ENCODE measurements at regions of chr17 and their contacts with region 1.

Region 1: GRCh38 chr17:76726231-76726775 is at the start of gene JMJD6:
- DNase-seq: peak; percentile 98
- H3K4me3 ChIP-seq: peak within 1 kb of the TSS; percentile 89 to 99 (median 98)
- H3K27ac ChIP-seq: peak within 1 kb of the TSS; percentile 100
- H3K4me1 ChIP-seq: peaks cover 21 to 65% (median 36%) of the 10 kb centered on the region in 4 donors
- H3K27me3 ChIP-seq: no peaks in the 10 kb centered on the region
- CTCF ChIP-seq: no peak
- EP300 ChIP-seq: no peak
- POLR2A ChIP-seq: peak; percentile 98
- total RNA-seq, gene JMJD6: 25.4 to 58.4 (median 26.9) TPM

Region 2: DNA sequence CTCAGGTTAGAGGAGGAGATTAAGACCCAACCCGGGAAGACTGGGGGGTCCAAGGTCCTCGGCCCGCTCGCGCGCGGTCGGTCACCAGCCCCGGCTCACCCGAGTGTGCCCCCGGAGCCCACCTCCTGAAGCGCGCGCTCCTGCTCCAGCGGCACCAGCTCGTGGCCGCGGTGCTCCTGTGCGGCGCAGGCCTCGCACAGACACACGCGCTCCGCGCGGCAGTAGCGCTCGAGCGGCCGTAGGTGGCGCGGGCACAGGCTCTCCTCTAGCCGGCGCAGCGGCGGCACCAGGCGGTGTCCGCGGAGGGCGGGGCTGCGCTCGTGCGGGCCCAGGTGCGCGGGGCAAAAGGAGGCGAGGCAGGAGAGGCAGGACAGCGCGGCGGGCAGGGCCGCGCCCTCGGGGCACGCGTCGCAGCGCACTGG is 848.5 kb before region 1 on chr17:
- in situ Hi-C with region 1: no loop called
- intact Hi-C with region 1: loop called (anchors 5 kb)
- DNase-seq: peak; percentile 88
- H3K4me3 ChIP-seq: peak overlapping the region; percentile 63 to 76 (median 70)
- H3K27ac ChIP-seq: peak overlapping the region; percentile 94 to 97 (median 96)
- H3K4me1 ChIP-seq: peaks cover 35 to 54% (median 45%) of the 10 kb centered on the region in 4 donors
- H3K27me3 ChIP-seq: no peaks in the 10 kb centered on the region
- CTCF ChIP-seq: peak; percentile 45 to 81 (median 55)
- EP300 ChIP-seq: no peak
- POLR2A ChIP-seq: peak; percentile 60